Activated CD4-positive, alpha-beta T cell treated with anti-CD3 and anti-CD28 coated beads, Interleukin-2, amount 10 ng/mL, durations not matched to agents 24 days and 14 days (primary cell): ENCODE measurements at regions of chr19 and their contacts with region 1.

Region 1: DNA sequence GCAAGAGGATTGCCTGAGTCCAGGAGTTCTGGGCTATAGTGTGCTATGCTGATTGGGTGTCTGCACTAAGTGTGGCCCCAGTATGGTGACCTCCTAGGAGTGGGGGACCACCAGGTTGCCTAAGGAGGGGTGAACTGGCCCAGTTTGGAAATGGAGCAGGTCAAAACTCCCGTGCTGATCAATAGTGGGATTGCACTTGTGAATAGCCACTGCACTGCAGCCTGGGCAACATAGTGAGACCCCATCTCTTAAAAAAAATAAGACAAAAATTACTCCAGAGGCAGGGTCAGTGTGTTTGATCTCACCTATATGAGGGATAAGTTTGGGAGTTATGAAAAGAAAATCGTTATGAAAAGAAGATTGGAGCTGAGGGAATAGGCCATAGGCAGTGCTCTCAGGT is 21.7 kb downstream of the PAF1 start:
- DNase-seq: no peak
- H3K4me3 Mint-ChIP-seq: no peak overlapping the region
- H3K27ac Mint-ChIP-seq: no peak overlapping the region
- H3K4me1 Mint-ChIP-seq: peaks cover 2% of the 10 kb centered on the region
- H3K27me3 Mint-ChIP-seq: no peaks in the 10 kb centered on the region

Region 2: DNA sequence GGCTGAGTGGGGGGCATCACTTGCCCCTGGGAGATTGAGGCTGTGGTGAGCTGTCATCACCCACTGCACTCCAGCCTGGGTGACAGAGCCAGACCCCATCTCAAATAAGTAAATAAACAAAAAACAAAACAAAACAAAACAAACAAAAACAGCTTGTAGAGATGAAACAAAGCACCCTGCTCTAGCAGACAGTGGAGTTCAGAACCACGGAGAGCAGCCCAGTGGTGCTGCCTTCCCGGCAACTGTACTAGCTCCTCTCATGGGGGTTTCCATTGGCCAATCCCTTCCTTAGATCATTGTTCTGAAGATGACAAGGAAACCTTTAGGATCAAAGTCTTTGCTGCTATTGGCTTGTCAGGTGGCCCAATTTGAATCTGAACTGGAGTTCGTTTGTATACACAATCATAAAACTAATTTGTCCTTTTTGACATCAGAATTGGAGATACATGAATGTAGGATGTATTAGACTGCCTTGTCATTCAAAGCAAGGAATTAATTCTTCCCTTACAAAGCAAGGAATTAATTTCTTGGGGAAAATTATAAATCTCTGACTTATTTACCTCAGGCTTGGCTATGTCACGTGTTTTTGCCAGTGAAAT is 145.4 kb before region 1 on chr19:
- intact Hi-C with region 1: no loop called
- DNase-seq: peak; percentile 75
- H3K4me3 Mint-ChIP-seq: no peak overlapping the region
- H3K27ac Mint-ChIP-seq: no peak overlapping the region
- H3K4me1 Mint-ChIP-seq: peaks cover 3% of the 10 kb centered on the region
- H3K27me3 Mint-ChIP-seq: peaks cover 19% of the 10 kb centered on the region

Region 3: GRCh38 chr19:39631178-39631577 is 262.0 kb after region 1 on chr19:
- intact Hi-C with region 1: loop called (anchors 5 kb)
- DNase-seq: no peak
- H3K4me3 Mint-ChIP-seq: no peak overlapping the region
- H3K27ac Mint-ChIP-seq: no peak overlapping the region
- H3K4me1 Mint-ChIP-seq: no peaks in the 10 kb centered on the region
- H3K27me3 Mint-ChIP-seq: peaks cover 15% of the 10 kb centered on the region